ENCODE measurements at regions of chr5 and their contacts with region 1.

Region 1: DNA sequence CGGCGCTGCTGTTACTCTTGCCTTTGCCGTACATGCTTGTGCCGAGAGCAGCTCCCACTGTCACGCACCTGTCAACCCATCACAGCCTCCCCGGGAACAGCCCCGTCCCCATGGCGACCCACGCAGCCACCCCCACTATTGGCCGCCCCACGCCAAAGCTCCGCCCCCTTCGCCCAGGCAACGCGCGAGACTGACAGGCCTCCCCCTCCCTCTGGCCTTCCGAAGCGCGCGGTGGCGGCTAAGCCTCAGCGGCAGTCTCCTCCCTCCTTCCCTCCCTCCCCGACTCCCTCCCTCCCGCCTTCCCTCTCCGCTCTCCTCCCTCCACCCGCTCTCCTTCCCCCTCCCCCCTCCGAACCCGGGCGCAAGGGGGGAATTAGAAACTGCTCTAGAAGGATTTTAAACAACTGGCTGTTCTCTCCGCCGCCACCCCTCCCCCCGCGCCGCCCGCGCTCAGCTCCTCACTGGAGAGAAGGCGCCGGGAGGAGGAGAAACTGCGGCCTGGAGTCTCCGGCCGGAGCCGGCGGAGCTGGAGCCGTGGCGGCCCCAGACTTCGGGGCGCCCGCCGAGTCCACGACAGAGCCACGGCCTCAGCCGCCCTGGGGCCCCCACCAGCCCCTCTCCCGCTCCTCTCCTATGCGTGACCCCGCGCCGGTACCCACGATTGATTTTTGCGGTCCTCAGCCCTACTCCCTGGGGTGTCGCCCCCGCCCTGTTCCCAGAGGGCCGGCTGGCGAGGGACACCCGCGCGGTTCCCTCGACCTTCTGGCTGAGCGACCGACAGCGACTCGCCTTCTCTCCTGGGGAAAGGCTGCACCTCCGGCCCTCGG is at the start of gene SSBP2:
- DNase-seq: peak; percentile 96
- CTCF ChIP-seq: no peak

Region 2: GRCh38 chr5:81848362-81848880 is 97.2 kb after region 1 on chr5:
- in situ Hi-C with region 1: loop called (anchors 10 kb)
- DNase-seq: no peak
- CTCF ChIP-seq: no peak

Measured in GM13976 (cell line).